ENCODE measurements at regions of chr1 and their contacts with region 1.

Region 1: DNA sequence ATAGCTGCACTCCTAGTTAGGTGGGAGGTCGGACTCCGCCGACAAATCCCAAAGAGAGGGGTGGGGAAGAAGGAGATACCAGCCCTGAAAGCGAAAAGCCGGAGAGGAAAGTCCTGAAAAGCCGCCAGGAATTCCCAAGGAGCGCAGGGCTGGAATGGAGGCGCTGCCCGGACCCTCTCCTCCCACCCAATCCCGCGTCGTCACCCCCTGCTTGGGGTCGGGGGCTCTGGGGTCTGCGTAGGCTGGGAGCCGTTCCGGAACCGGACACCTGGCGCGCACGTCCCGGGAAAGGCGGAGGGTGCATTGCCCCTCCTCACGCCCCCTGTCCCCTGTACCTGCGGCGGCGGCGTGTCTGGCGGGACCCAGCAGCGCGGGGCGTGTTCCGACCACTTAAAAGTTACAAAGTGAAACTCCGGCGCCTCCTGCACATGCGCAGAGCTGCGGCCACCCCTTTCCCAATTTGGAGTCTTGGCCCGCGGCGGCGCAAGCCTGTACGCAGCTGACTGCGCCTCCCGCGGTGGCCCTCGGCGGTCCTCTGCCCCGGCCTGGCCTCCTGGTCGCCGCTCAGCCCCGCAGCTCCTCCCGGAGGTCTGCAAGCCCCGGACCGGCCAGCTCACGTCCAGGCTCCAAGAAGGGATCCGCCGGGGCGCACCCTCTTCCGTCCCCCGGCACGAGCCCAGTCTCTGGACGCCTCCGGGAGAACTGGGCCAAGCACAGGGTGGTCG is at the start of gene TMEM63A:
- DNase-seq: peak; percentile 83 to 95 (median 88)
- ATAC-seq: peak; percentile 71 to 76
- H3K4me3 Mint-ChIP-seq: peak within 1 kb of the TSS; percentile 87 to 99 (median 94)
- H3K27ac Mint-ChIP-seq: peak within 1 kb of the TSS; percentile 87 to 98 (median 94)
- H3K4me1 Mint-ChIP-seq: peaks cover 28 to 55% (median 49%) of the 10 kb centered on the region in 4 donors
- H3K27me3 Mint-ChIP-seq: no peaks in the 10 kb centered on the region
- polyA plus RNA-seq, gene TMEM63A: 34.4 to 53.5 (median 45.1) TPM

Region 2: DNA sequence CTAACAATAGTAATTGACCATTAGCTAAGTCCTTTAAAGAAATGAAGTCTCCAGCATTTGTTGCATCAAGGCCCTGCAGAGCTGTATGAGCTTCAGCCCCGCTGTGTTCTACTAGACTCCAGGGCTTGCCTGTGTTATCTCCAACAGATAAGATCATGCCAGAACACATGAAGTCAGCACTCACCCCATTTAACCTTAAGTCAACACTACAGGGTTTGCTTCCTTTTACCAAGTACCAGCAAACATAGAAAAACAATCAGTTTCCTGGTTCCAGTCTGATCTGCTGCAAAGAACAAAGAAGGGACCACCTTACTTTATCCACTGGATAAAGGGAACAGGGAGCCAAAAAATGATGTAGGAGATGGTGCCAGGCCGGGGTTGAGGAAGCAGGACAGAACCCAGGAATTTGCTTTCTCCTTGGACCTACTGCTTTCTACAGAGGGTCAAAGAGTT is 188.0 kb before region 1 on chr1:
- POLR2A ChIA-PET with region 1: no interaction called
- DNase-seq: no peak
- ATAC-seq: no peak
- H3K4me3 Mint-ChIP-seq: no peak overlapping the region
- H3K27ac Mint-ChIP-seq: no peak overlapping the region
- H3K4me1 Mint-ChIP-seq: no peaks in the 10 kb centered on the region
- H3K27me3 Mint-ChIP-seq: peaks cover 0 to 3% (median 2%) of the 10 kb centered on the region in 5 donors

Region 3: GRCh38 chr1:225845571-225846259 is 36.4 kb before region 1 on chr1:
- POLR2A ChIA-PET with region 1: interaction called, 52 read pairs
- DNase-seq: peak in 3 of 10 donors; percentile 30 to 38 (median 35)
- ATAC-seq: no peak
- H3K4me3 Mint-ChIP-seq: peak overlapping the region in 2 of 10 donors; percentile 6 to 19
- H3K27ac Mint-ChIP-seq: peak overlapping the region in 9 of 10 donors; percentile 46 to 96 (median 81)
- H3K4me1 Mint-ChIP-seq: peaks cover 38 to 80% (median 71%) of the 10 kb centered on the region in 4 donors
- H3K27me3 Mint-ChIP-seq: no peaks in the 10 kb centered on the region

Region 4: GRCh38 chr1:225866061-225866837 is 15.9 kb before region 1 on chr1:
- POLR2A ChIA-PET with region 1: interaction called, 92 read pairs
- DNase-seq: peak; percentile 36 to 87 (median 76)
- ATAC-seq: peak; percentile 89 to 94
- H3K4me3 Mint-ChIP-seq: peak overlapping the region; percentile 53 to 82 (median 74)
- H3K27ac Mint-ChIP-seq: peak overlapping the region; percentile 82 to 95 (median 90)
- H3K4me1 Mint-ChIP-seq: peaks cover 22 to 56% (median 44%) of the 10 kb centered on the region in 4 donors
- H3K27me3 Mint-ChIP-seq: no peaks in the 10 kb centered on the region

Region 5: DNA sequence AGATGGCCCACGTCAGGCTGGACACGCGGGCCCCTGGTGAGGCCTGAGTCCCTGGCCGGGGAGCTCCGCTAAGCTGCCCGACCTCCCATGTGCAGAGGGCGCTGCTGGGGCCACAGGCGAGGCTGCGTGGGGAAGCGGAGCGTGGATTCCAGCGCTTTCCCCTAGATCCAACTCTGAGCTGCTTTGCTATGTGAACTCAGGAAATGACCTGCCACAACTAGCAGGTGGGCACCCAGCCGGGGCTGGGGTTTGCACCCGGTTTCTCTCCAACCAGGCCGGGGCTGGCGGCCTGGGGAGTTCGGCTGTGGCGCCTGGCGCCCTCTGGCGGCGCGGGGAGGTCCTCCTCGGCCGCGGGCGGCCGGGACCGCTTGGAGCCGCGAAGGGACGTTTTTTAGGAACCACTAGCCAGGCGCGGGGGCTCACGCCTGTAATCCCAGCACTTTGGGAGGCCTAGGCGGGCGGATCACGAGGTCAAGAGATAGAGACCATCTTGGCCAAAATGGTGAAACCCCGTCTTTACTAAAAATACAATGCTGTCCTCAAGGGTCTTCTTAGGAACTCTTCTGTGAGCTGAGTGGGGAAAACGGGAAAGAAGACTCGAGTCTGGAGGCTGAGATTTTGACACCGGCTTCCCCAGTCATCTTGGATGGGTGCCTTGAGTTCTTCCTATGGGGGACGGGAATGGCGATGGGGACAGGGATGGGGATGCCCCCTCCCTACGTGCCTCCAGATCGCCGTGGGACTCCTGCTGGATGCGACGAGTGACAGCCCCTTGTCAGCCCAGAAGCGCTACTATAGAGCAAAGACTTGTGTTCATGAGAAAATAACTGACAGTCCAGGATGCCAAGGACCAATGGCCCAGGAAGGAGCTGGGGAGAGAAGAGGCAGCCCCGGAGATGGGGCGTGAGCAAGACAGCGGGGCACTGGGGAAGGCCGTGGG is 29.3 kb after region 1 on chr1:
- POLR2A ChIA-PET with region 1: interaction called, 180 read pairs
- DNase-seq: peak; percentile 51 to 85 (median 76)
- ATAC-seq: peak; percentile 94 to 96
- H3K4me3 Mint-ChIP-seq: peak overlapping the region in 5 of 10 donors; percentile 14 to 62 (median 25)
- H3K27ac Mint-ChIP-seq: peak overlapping the region in 9 of 10 donors; percentile 19 to 84 (median 73)
- H3K4me1 Mint-ChIP-seq: peaks cover 25 to 56% (median 39%) of the 10 kb centered on the region in 4 donors
- H3K27me3 Mint-ChIP-seq: no peaks in the 10 kb centered on the region

Region 6: DNA sequence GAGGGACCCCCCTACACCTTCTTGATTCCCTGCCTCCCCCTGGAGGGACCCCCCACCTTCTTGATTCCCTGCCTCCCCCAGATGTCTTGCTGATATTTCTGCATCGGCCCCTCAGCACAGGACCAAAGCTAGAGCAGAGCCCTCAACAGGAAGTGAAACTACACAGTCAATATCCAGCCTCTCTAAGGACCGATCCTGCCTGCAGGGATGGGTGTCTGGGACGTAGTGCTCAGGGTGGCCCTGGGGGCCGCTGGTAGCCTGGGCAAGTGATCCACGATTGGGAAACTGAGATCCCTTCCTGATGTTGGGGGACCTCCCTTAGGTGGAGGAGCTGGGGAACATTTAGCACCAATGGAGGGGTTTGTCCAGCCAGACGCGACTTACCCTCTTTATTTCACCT is 62.8 kb after region 1 on chr1:
- POLR2A ChIA-PET with region 1: interaction called, 12 read pairs
- DNase-seq: no peak
- ATAC-seq: peak; percentile 74 to 86
- H3K4me3 Mint-ChIP-seq: peak overlapping the region; percentile 20 to 77 (median 67)
- H3K27ac Mint-ChIP-seq: peak overlapping the region in 9 of 10 donors; percentile 27 to 91 (median 76)
- H3K4me1 Mint-ChIP-seq: peaks cover 10 to 22% (median 17%) of the 10 kb centered on the region in 4 donors
- H3K27me3 Mint-ChIP-seq: peaks cover 0 to 3% (median 0%) of the 10 kb centered on the region in 5 donors

Region 7: DNA sequence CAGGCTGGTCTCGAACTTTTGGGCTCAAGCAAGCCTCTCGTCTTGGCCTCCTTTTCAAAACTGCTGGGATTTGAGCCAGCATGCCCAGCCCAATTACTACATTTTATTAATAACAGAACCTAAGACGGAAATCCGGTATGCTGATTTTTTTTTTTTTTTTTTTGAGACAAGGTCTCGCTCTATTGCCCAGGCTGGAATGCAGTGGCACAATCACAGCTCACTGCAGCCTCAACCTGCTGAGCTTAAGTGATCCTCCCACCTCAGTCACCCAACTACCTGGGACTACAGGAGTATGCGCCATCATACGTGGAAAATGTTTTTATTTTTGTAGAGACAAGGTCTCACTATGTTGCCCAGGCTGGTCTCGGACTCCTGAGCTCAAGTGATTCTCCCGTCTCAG is 284.2 kb after region 1 on chr1:
- POLR2A ChIA-PET with region 1: no interaction called
- DNase-seq: no peak
- ATAC-seq: no peak
- H3K4me3 Mint-ChIP-seq: no peak overlapping the region
- H3K27ac Mint-ChIP-seq: no peak overlapping the region
- H3K4me1 Mint-ChIP-seq: peaks cover 11 to 24% (median 18%) of the 10 kb centered on the region in 4 donors
- H3K27me3 Mint-ChIP-seq: no peaks in the 10 kb centered on the region

Measured in naive thymus-derived CD8-positive, alpha-beta T cell (primary cell).